Left lung (tissue), 14 donors: ENCODE measurements at regions of chr1 and their contacts with region 1.

Region 1: DNA sequence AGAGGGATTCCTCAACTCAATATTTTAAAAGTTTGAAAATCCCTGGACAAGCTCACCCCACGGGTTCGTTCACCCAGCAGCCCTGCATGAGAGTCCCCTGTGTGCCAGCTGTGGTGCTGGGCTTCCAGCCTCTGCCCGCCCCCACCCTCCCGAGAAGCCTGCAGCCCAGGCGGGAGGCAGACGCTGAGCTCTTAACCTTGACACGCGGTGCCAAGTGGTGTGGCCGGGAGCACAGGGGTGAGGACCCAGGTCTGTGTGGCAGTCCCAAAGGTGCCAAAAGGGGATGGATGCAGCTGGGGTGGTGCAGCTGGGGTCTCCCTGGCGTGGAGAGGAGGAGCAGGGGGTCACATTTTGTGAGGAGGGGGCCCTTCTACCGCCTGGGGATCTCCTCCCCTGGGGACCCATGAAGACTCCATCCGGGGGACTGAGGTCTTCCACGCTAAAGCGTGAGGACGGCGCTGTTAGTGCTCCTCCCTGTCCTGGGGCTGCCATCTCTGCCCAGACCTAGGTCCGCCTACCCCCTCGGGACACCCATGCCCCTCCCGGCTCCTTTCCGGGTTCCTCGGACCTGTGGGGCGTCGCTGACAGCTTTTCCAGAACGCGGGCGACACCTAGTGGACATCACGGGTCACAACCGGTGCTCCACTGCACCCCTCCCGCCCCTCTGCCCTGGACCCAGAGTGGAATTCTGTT is 12.9 kb downstream of the PLA2G2F start:
- DNase-seq: peak; percentile 77 to 91 (median 87)
- ATAC-seq: peak; percentile 93
- H3K4me3 ChIP-seq: peak overlapping the region; percentile 8 to 21
- H3K27ac ChIP-seq: peak overlapping the region in 1 of 2 donors; percentile 58
- H3K4me1 ChIP-seq: peaks cover 11 to 25% of the 10 kb centered on the region in 2 donors
- H3K27me3 ChIP-seq: peaks cover 0 to 7% of the 10 kb centered on the region in 2 donors
- CTCF ChIP-seq: peak; percentile 93 to 94

Region 2: DNA sequence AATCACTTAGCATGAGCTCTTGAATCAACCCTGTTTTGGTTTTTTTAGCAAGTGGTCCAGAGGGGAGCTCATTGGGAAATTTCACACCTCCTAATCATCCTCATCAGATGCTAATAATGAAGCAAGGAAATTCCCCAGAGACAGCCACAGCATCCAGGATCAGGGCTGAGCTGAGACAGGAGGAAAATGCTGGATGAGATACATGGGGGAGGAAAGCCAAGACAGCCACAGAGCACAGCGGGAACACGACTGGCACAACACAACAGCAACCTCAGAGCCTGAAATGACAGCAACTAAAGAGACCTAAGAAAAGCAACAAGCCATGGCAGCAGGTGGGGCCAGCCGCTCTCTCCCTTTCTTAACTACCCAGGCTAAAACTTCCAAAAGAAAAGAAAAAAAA is 1012.3 kb before region 1 on chr1:
- intact Hi-C with region 1: no loop called
- DNase-seq: no peak
- ATAC-seq: peak; percentile 26
- H3K4me3 ChIP-seq: no peak overlapping the region
- H3K27ac ChIP-seq: no peak overlapping the region
- H3K4me1 ChIP-seq: no peaks in the 10 kb centered on the region
- H3K27me3 ChIP-seq: no peaks in the 10 kb centered on the region
- CTCF ChIP-seq: no peak

Region 3: DNA sequence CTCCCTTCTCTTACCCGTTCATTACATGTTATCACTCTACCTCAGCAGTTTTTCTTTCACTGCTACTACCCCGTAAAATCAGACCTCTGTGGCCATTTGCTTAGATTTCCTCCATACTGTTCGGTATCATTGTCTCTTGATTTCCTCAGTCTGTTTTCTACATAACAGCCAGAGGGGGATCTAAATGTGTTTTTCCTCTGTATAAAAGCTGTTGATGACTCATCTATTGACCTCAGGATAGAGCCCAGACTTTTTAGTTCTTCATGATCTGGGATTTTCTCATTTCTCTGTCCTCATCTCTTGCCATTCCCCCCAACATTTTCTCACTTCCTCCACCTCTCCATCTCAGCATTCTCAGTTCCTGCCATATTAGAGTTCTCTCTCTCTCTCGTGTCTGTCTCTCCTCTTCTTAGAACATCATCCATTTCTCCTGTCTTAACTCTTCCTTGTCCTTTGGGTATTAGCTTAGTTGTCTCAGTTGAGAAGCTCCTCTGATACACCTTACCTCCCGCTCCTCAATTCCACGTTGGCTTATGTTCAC is 259.4 kb before region 1 on chr1:
- intact Hi-C with region 1: no loop called
- DNase-seq: no peak
- ATAC-seq: no peak
- H3K4me3 ChIP-seq: no peak overlapping the region
- H3K27ac ChIP-seq: no peak overlapping the region
- H3K4me1 ChIP-seq: peaks cover 0 to 7% of the 10 kb centered on the region in 2 donors
- H3K27me3 ChIP-seq: no peaks in the 10 kb centered on the region
- CTCF ChIP-seq: no peak

Region 4: GRCh38 chr1:19918057-19918456 is 234.0 kb before region 1 on chr1:
- intact Hi-C with region 1: loop called in 1 of 2 experiments (anchors 5 kb)
- DNase-seq: peak in 3 of 4 donors; percentile 72 to 89 (median 79)
- ATAC-seq: peak; percentile 90
- H3K4me3 ChIP-seq: no peak overlapping the region
- H3K27ac ChIP-seq: no peak overlapping the region
- H3K4me1 ChIP-seq: no peaks in the 10 kb centered on the region
- H3K27me3 ChIP-seq: peaks cover 0 to 12% of the 10 kb centered on the region in 2 donors
- CTCF ChIP-seq: peak; percentile 83 to 85